Activated CD4-positive, alpha-beta T cell treated with anti-CD3 and anti-CD28 coated beads, Interleukin-2, amount 10 ng/mL, durations not matched to agents 24 days and 14 days (primary cell): ENCODE measurements at regions of chr9 and their contacts with region 1.

Region 1: DNA sequence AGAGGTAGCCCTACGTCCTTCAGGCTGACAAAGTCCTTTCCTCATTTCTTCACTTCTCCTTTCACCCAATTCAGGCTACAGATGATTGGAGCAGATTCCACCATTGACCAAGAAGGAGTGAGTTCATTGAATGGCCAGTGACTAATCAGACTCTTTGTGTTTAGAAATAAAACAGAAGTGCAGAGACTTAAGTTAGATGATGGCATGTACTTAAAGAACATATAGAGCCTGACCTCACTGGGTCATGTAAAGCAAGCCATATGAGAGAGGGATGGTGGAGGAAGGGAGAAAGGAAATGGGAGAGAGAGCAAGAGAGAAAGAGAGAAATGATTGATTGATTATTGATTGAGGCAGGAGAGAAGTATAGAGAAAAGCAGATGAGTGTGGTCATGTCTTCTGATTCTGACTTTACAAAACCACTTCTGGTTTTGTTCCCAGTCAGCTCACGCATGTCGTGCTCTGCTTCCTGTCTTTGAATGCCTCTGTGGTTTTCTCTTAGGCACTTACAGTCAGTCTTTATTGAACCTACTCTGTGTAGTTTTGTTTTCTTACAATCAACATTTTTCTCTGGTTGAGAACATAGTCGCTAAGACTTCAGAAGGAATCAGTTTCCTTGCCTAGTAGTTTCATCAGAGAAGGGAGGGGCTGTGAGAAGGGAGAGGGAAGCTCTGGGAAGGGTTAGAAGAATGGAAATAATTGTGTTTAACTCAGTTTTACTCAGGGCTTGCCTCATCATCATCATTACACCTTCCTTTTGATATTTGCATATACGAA is 149.2 kb upstream of the KLF9 start:
- DNase-seq: peak; percentile 90
- H3K4me3 Mint-ChIP-seq: peak overlapping the region; percentile 60
- H3K27ac Mint-ChIP-seq: peak overlapping the region; percentile 95
- H3K4me1 Mint-ChIP-seq: peaks cover 47% of the 10 kb centered on the region
- H3K27me3 Mint-ChIP-seq: no peaks in the 10 kb centered on the region

Region 2: DNA sequence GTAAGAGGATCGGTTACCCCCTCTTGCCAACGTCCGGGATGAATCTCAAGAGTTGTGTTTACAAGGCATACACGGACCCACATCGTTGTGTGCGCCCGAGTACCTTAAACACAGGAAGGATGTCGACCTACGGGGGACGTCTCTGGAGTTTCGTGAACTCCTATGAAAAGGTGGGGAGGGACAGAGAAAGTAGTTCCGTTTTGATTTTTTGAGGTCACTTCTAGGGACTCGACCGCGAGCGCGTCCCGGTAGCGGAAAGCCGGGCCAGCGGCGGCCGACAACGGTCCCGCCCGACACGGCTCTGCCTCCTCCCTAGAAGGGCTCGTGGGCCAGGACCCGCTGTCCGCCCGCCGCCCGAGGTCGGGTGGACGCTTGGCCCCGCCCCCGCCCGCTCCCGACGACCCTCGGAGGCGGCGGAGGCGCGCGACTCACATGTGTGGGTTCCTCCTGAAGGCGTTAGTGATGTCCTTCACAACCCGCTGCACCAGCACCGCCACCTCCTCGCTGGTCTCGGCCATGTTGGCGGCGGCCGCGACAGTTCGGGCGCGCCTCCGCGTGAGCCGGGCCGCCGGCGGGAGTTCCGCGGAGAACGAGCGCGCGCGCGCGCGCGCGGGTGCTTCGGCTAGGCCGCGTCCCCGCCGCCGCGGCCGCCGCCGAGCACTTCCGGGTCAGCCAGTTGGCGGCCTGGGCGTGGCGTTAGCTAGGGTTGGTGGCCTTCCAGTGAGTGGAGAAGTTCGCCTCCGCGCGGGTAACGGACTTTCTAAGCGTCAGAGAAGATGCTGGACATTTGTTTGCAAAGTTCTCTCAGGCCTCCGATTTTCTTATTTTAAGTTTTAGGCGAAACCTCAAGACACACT is 804.0 kb before region 1 on chr9 and contains the start of gene PTAR1:
- intact Hi-C with region 1: loop called (anchors 10 kb)
- DNase-seq: peak; percentile 97
- H3K4me3 Mint-ChIP-seq: peak within 1 kb of the TSS; percentile 98
- H3K27ac Mint-ChIP-seq: peak within 1 kb of the TSS; percentile 96
- H3K4me1 Mint-ChIP-seq: peaks cover 29% of the 10 kb centered on the region
- H3K27me3 Mint-ChIP-seq: no peaks in the 10 kb centered on the region
- total RNA-seq, gene PTAR1: 51.0 and 56.1 TPM in 2 replicates

Region 3: DNA sequence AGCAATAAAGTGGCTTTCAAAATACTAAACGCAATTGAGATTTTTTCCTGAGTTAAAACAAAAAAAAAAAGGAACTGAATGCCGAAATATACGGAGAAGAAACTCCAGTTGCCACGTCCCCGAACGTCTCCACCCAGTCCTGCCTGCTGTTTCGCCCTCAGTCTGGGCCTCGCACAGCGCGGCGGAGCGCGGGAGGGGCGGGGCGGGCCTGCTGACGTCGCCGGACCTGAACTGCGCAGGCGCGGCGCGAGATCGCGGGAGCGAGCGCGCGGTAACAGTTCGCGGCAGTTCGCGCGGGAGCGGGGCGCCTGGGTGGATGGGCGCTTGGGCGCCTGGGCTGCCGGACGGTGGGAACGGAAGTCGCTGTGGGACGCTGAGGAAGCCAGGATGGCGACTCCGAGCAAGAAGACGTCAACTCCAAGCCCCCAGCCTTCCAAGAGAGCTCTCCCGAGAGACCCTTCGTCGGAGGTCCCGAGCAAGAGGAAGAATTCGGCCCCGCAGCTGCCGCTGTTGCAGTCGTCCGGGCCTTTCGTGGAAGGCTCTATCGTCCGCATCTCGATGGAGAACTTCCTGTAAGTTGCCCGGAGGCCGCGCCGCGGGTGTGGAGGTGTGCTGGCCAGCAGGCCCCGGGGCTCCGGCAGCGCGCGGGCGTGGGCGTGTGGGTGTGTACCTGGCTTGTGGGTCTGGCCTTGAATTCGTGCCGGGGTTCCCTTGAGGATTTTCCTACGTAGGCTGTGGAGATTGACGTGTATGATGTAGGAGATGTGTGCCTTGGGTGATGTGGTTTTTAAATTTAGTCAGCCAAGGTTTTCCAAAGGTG is 304.7 kb before region 1 on chr9 and contains the start of gene SMC5:
- intact Hi-C with region 1: loop called (anchors 2 kb)
- DNase-seq: peak; percentile 98
- H3K4me3 Mint-ChIP-seq: peak within 1 kb of the TSS; percentile 91
- H3K27ac Mint-ChIP-seq: peak within 1 kb of the TSS; percentile 85
- H3K4me1 Mint-ChIP-seq: peaks cover 49% of the 10 kb centered on the region
- H3K27me3 Mint-ChIP-seq: peaks cover 11% of the 10 kb centered on the region
- total RNA-seq, gene SMC5: 47.0 and 50.7 TPM in 2 replicates

Region 4: DNA sequence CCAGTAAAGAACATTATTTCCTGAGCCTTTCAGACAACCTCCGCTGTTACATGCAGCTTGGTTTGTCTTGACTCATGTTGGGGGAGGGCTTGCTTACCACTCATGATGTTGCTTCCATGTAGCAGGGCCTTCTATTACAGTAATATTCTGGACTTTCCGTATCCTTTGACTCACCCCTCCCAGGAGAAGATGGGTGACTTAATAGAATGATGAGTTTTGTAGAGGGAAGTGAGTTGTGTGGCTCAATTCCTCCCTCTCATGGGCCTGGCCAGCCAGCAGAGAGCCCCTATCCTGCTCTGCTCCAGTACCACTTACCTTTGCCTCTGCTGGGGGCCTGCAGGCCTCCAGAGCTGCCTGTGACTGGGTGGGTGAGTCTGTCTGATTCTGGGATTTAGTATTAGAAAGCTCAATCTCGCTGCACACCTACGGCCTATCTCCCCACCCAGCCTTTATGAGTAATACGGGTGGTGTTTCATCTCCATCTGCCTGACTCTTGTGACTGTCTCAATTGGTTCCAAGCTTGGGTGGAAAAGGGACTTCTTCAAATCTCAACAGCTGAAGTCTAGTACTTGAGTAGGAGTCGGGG is 96.5 kb before region 1 on chr9:
- intact Hi-C with region 1: loop called (anchors 5 kb)
- DNase-seq: no peak
- H3K4me3 Mint-ChIP-seq: peak overlapping the region; percentile 14
- H3K27ac Mint-ChIP-seq: peak overlapping the region; percentile 77
- H3K4me1 Mint-ChIP-seq: peaks cover 39% of the 10 kb centered on the region
- H3K27me3 Mint-ChIP-seq: no peaks in the 10 kb centered on the region

Region 5: GRCh38 chr9:70485273-70485858 is 78.3 kb before region 1 on chr9:
- intact Hi-C with region 1: no loop called
- DNase-seq: no peak
- H3K4me3 Mint-ChIP-seq: no peak overlapping the region
- H3K27ac Mint-ChIP-seq: no peak overlapping the region
- H3K4me1 Mint-ChIP-seq: peaks cover 5% of the 10 kb centered on the region
- H3K27me3 Mint-ChIP-seq: no peaks in the 10 kb centered on the region

Region 6: DNA sequence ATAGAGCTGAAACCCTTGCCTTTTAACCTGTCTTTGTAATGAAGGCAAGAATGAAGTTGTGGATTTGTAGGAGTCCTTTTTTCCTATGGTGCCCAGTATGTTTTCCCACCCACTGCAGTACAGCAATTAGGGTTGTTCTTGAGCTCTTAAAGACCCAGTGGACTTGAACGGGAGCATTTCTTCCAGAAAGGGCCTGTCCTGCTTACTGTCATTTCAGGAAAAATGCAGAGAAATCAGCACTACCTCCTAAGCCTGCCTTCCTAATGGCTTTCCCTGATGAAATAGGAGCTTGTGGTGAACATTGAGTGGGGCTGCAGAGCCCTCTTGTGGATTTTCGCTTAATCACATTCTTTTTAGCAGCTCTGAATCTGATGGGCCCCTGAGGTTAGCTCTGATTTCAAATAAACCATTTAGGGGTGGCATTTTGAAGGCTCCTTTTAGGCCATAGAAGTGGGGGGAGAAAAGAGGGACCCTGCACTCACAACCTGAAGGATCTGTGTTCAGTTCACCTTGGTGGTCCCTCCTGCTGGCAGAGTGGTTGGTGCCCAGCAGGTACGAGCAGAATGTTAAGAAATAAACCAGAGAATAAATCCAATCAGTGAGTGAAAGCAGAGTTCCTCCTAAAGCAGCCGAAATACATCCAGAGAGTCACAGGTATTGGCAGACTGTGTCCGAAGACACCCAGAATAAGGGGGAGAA is 38.9 kb after region 1 on chr9:
- intact Hi-C with region 1: loop called (anchors 2 kb)
- DNase-seq: peak; percentile 85
- H3K4me3 Mint-ChIP-seq: no peak overlapping the region
- H3K27ac Mint-ChIP-seq: no peak overlapping the region
- H3K4me1 Mint-ChIP-seq: peaks cover 5% of the 10 kb centered on the region
- H3K27me3 Mint-ChIP-seq: no peaks in the 10 kb centered on the region